PC-3 (cell line): ENCODE measurements at regions of chr2 and their contacts with region 1.

Region 1: DNA sequence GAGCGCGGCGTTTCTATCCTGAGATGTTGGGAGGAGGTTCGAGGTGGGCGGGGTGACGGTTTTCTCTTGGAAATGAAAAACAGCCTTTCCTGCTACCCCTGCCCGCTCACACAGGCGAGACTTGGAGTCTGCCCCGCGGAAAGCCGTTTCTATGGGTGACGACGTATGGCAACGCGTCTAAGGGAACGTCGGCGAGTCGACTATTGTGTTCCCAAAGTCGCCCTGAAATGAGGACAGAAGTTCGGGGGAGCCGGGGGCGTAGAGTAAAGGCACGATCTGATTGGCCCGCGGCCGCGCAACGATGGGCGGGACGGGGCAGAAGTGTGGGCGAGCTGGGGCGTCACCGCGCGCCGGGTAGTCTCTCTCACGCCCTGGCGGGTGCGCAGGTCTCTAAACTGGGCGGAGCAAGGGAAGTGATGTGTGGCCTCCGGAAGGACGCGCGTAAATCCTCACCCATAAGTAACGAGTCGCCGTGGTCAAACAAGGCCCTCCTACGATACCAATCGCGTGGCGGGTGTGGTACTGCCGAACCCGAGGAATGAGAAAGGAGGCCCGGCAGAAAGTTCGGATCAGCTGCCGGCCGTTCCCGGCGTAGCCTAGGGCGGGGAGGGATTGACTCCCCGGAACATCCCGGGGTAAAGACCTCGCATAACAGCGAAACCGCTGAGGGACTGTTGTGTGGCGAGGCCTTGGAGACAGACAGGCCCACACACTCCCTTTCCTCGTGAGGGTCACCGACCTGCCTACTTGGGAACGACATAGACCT is 89.6 kb downstream of the FAM161A start:
- DNase-seq: peak; percentile 97
- ATAC-seq: peak; percentile 96
- H3K4me3 ChIP-seq: peak overlapping the region; percentile 95
- H3K27ac ChIP-seq: peak overlapping the region; percentile 96
- H3K4me1 ChIP-seq: peaks cover 37% of the 10 kb centered on the region
- H3K27me3 ChIP-seq: no peaks in the 10 kb centered on the region
- CTCF ChIP-seq: no peak

Region 2: DNA sequence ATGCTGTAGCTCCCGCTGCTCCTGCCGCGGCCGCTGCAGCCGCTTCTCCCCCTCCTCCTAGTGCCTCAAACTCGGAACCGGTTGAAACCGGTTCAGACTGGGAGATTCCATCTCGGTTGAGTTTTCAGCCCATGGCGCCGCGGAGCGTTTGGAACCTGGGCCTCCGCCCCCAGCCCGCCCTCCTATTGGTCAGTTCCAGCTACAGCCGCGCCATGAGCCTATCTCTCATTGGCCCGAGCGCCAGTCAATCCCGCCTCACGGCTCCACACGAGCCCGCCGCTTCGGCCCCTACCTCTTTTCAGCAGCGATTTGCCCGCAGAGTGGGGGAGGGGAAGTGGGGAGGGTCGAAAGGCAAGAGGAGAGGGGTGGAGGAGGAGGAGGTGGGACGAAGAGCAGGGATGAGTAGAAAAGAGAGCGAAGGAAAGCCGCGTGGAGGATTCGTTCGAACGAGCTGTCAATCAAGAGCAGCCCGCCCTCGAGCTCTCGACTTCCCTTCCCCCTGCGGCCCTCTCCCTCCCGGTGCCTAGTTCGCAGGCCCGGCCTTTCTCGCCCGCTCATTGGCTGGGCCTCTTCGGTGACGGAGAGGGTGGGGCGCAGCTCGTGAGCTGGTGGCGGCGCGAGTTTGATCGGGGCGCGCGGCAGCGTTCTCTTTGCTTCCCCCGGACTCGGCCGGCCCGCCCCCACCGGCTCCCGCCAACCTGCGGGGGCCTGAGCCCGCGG is 225.9 kb before region 1 on chr2 and contains the start of gene XPO1:
- CTCF ChIA-PET with region 1: no interaction called
- POLR2A ChIA-PET with region 1: interaction called, 6 read pairs
- intact Hi-C with region 1: loop called (anchors 1 kb)
- DNase-seq: peak; percentile 99
- ATAC-seq: peak; percentile 82
- H3K4me3 ChIP-seq: peak within 1 kb of the TSS; percentile 94
- H3K27ac ChIP-seq: peak within 1 kb of the TSS; percentile 93
- H3K4me1 ChIP-seq: peaks cover 25% of the 10 kb centered on the region
- H3K27me3 ChIP-seq: no peaks in the 10 kb centered on the region
- CTCF ChIP-seq: no peak
- total RNA-seq, gene XPO1: 138 and 170 TPM in 2 replicates

Region 3: DNA sequence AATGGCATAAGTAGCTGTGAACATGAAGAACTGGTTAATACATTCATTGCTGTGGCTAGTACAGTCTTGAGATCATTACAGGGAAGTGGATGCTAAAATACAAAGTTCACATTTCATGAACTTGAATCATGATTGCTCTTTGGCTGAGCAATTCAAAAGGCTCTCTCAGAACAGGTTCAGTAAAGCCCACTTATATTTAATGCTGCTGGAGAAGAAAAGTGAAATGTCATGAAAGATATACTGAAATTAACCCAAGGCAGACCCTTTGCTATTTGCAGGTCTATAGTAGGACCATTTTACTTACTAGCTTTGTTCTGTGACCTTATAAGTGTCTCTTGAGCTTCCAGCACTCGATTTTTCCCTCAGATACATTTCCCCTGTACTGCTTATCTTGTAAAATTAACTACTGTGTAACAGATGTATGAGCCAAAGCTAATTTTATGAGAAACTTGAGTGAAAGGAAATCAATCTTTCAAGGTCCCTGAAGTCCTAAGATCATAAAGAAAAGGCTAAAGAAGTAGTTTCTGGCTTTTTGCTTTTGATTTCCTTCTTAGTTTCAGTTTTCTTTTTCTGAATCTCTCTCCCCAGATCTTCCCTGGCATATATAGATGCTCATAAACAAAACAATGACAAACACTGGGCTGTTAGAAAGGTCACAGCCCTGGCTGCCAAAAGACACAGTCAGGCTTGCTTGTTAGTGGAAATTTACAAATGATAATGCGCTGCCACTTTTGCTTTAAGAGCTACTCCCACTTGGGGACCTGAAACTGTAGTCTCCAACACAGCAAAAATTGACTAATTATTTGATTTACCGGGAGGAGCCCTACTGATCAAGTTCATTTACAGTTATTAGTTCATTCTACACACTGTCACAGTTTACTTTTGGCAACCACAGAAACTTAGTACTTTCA is 93.4 kb before region 1 on chr2:
- CTCF ChIA-PET with region 1: no interaction called
- POLR2A ChIA-PET with region 1: interaction called, 3 read pairs
- intact Hi-C with region 1: loop called (anchors 10 kb)
- DNase-seq: peak; percentile 56
- ATAC-seq: peak; percentile 80
- H3K4me3 ChIP-seq: peak overlapping the region; percentile 34
- H3K27ac ChIP-seq: peak overlapping the region; percentile 44
- H3K4me1 ChIP-seq: peaks cover 18% of the 10 kb centered on the region
- H3K27me3 ChIP-seq: no peaks in the 10 kb centered on the region
- CTCF ChIP-seq: no peak

Region 4: DNA sequence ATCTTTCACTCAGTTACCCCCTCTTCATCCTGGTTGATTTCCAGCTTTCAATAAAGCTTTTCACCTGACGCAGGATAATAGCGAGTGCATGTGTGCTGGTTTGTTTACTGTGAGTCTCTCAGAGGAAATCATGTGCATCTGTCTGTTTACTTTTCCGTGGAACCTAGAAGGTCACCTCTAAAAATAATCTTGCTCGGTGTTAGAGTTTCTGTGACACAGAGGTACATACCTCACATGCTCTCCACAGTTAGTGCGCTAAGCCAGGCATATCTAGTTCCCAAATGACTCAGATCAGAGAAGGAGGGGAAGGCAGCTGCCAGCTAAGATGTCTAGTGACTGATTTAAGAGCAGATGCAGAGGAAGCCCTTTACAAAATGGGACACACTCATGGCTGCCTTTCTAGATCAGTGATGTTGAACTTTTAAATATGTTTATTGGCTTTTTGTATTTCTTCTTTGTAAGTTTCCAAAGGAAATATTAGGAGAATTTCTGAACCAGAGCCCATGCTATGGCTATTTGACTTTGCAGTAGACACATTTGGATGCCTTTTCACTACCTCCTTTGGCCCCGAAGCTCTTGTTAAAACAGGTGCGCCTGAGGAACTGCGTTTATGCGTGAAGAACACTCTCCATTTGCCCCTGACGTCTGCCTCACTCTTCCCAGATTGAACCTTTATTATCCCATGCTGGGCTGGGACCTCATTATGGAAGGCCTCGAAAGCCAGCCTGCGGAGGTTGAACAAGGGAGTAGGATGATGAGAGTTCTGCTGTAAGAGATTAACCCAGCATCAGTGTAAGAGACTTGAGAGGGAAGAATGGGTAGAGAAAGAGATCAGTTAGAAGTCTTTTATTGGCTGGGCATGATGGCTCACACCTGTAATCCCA is 56.0 kb before region 1 on chr2:
- CTCF ChIA-PET with region 1: no interaction called
- POLR2A ChIA-PET with region 1: no interaction called
- intact Hi-C with region 1: loop called (anchors 1 kb)
- DNase-seq: peak; percentile 80
- ATAC-seq: peak; percentile 100
- H3K4me3 ChIP-seq: peak overlapping the region; percentile 46
- H3K27ac ChIP-seq: no peak overlapping the region
- H3K4me1 ChIP-seq: peaks cover 5% of the 10 kb centered on the region; the same call in 1 of the 2 replicates
- H3K27me3 ChIP-seq: no peaks in the 10 kb centered on the region
- CTCF ChIP-seq: no peak

Region 5: DNA sequence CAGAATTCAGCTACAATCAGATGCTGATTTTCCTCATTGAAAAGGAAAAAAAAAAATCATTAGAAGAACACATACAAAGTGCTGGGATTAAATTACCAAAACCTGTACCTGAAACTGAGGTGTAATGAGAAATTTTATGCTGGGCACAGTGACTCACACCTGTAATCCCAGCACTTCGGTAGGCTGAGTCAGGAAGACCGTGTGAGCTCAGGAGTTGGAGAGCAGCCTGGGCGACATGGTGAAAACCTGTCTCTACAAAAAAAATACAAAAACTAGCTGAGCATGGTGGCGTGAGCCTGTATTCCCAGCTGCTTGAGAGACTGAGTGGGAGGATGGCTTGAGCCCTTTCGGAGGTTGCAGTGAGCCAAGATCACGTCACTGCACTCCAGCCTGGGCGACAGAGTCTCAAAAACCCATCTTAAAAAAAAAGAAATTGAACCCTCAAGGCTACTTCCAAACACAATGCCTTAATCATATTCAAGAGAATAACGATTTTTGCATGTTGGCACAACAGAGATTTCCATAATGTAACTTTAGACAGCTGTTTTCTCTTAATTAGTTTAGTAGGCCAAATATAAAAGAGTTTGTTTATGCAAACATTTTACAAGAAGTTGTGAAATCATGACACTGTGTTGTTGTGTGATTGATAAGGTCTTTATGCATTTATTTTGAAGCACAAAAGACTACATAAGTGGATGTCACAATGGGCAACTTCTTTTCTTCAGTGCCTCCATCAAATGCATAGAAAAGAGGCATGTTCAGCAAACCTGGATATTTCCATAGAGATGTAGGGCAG is 25.8 kb after region 1 on chr2:
- CTCF ChIA-PET with region 1: interaction called, 6 read pairs
- POLR2A ChIA-PET with region 1: no interaction called
- intact Hi-C with region 1: loop called (anchors 1 kb)
- DNase-seq: peak; percentile 64
- ATAC-seq: no peak
- H3K4me3 ChIP-seq: no peak overlapping the region
- H3K27ac ChIP-seq: no peak overlapping the region
- H3K4me1 ChIP-seq: peaks cover 7% of the 10 kb centered on the region
- H3K27me3 ChIP-seq: no peaks in the 10 kb centered on the region
- CTCF ChIP-seq: no peak

Region 6: DNA sequence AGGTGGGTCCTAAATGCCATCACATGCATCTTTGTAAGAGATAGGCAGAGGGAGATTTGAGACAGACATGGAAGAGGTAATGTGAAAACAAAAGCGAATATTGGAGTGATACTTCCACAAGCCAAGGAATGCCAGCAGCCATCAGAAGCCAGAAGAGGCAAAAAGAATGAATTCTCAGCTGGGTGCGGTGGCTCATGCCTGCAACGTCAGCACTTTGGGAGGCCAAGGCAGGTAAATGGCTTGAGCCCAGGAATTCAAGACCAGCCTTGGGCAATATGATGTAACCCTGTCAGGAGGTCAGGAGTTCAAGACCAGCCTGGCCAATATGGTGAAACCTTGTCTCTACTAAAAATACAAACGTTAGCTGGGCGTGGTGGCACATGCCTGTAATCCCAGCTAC is 34.8 kb after region 1 on chr2:
- CTCF ChIA-PET with region 1: interaction called, 6 read pairs
- POLR2A ChIA-PET with region 1: no interaction called
- intact Hi-C with region 1: loop called (anchors 5 kb)
- DNase-seq: no peak
- ATAC-seq: no peak
- H3K4me3 ChIP-seq: no peak overlapping the region
- H3K27ac ChIP-seq: no peak overlapping the region
- H3K4me1 ChIP-seq: no peaks in the 10 kb centered on the region
- H3K27me3 ChIP-seq: no peaks in the 10 kb centered on the region
- CTCF ChIP-seq: no peak

Region 7: GRCh38 chr2:61854474-61855182 is 90.4 kb after region 1 on chr2:
- CTCF ChIA-PET with region 1: no interaction called
- POLR2A ChIA-PET with region 1: no interaction called
- intact Hi-C with region 1: loop called (anchors 2 kb)
- DNase-seq: peak; percentile 98
- ATAC-seq: peak; percentile 82
- H3K4me3 ChIP-seq: peak overlapping the region; percentile 84
- H3K27ac ChIP-seq: peak overlapping the region; percentile 50
- H3K4me1 ChIP-seq: peaks cover 5% of the 10 kb centered on the region; the same call in 1 of the 2 replicates
- H3K27me3 ChIP-seq: no peaks in the 10 kb centered on the region
- CTCF ChIP-seq: no peak